Activated CD8-positive, alpha-beta T cell treated with anti-CD3 and anti-CD28 coated beads for 36 hours (primary cell): ENCODE measurements at regions of chrX and their contacts with region 1.

Region 1: GRCh38 chrX:9456250-9457074 is 8.4 kb upstream of the TBL1X start:
- DNase-seq: peak; percentile 50
- ATAC-seq: peak; percentile 89
- H3K4me3 Mint-ChIP-seq: no peak overlapping the region
- H3K27ac Mint-ChIP-seq: peak overlapping the region; percentile 94
- H3K4me1 Mint-ChIP-seq: peaks cover 36% of the 10 kb centered on the region
- H3K27me3 Mint-ChIP-seq: no peaks in the 10 kb centered on the region
- CTCF ChIP-seq: no peak

Region 2: GRCh38 chrX:9312922-9313867 is 143.3 kb before region 1 on chrX:
- CTCF ChIA-PET with region 1: no interaction called
- POLR2A ChIA-PET with region 1: no interaction called
- intact Hi-C with region 1: no loop called
- DNase-seq: peak; percentile 85
- ATAC-seq: peak; percentile 89
- H3K4me3 Mint-ChIP-seq: no peak overlapping the region
- H3K27ac Mint-ChIP-seq: no peak overlapping the region
- H3K4me1 Mint-ChIP-seq: peaks cover 11% of the 10 kb centered on the region
- H3K27me3 Mint-ChIP-seq: no peaks in the 10 kb centered on the region
- CTCF ChIP-seq: peak; percentile 64

Region 3: GRCh38 chrX:9352694-9353411 is 103.6 kb before region 1 on chrX:
- CTCF ChIA-PET with region 1: no interaction called
- POLR2A ChIA-PET with region 1: no interaction called
- intact Hi-C with region 1: loop called (anchors 5 kb)
- DNase-seq: peak; percentile 78
- ATAC-seq: peak; percentile 64
- H3K4me3 Mint-ChIP-seq: peak overlapping the region; percentile 40
- H3K27ac Mint-ChIP-seq: peak overlapping the region; percentile 83
- H3K4me1 Mint-ChIP-seq: peaks cover 33% of the 10 kb centered on the region
- H3K27me3 Mint-ChIP-seq: no peaks in the 10 kb centered on the region
- CTCF ChIP-seq: no peak

Region 4: DNA sequence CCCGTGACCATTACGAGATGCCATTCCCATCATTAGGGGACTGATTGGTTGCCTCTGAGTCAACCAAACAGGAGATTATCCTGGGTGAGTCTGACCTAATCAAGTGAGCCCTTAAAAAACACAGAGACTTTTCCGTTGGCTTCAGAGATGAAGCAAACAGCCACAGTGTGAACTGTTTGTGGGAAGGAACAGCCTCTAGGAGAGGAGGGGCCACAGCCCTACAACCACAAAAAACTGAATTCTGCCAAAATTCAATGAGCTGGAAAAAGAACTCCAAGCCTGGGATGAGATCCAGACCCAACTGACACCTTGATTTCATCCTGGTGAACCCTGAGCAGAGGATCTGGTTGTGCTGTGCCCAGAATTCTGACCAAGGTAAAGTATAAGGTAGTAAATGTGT is 22.9 kb before region 1 on chrX:
- CTCF ChIA-PET with region 1: no interaction called
- POLR2A ChIA-PET with region 1: no interaction called
- intact Hi-C with region 1: loop called (anchors 2 kb)
- DNase-seq: no peak
- ATAC-seq: no peak
- H3K4me3 Mint-ChIP-seq: no peak overlapping the region
- H3K27ac Mint-ChIP-seq: no peak overlapping the region
- H3K4me1 Mint-ChIP-seq: no peaks in the 10 kb centered on the region
- H3K27me3 Mint-ChIP-seq: no peaks in the 10 kb centered on the region
- CTCF ChIP-seq: no peak

Region 5: DNA sequence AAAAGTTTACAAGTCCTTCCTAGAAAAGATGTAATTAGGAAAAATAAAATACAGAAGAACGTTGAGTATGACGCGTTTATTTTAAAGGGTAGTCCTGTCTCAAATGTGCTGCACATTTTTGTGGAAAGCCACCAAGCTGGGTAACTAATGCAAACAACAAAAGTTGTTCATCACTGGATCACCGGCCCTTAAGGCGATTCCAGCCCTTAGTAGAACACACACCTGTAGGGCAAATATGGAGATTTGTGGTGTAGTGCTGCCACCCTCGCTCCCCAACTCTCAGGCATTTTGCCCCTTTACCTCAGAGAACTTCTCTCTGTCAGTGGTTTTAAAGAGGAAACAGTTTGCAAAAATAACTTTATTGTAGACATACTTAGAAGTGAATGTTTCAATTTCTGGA is 10.3 kb after region 1 on chrX:
- CTCF ChIA-PET with region 1: no interaction called
- POLR2A ChIA-PET with region 1: no interaction called
- intact Hi-C with region 1: no loop called
- DNase-seq: peak; percentile 12
- ATAC-seq: no peak
- H3K4me3 Mint-ChIP-seq: peak overlapping the region; percentile 76
- H3K27ac Mint-ChIP-seq: peak overlapping the region; percentile 78
- H3K4me1 Mint-ChIP-seq: peaks cover 36% of the 10 kb centered on the region
- H3K27me3 Mint-ChIP-seq: no peaks in the 10 kb centered on the region
- CTCF ChIP-seq: no peak